Activated naive CD8-positive, alpha-beta T cell treated with anti-CD3 and anti-CD28 coated beads, Interleukin-2, amount 10 ng/mL, durations not matched to agents 7 days and 5 days (primary cell): ENCODE measurements at regions of chr22 and their contacts with region 1.

Region 1: GRCh38 chr22:41448189-41448808 is 1.7 kb upstream of the TOB2 start:
- DNase-seq: peak; percentile 81
- ATAC-seq: peak; percentile 65
- H3K4me3 Mint-ChIP-seq: peak overlapping the region; percentile 84
- H3K27ac Mint-ChIP-seq: peak overlapping the region; percentile 91
- H3K4me1 Mint-ChIP-seq: peaks cover 13% of the 10 kb centered on the region
- H3K27me3 Mint-ChIP-seq: no peaks in the 10 kb centered on the region

Region 2: DNA sequence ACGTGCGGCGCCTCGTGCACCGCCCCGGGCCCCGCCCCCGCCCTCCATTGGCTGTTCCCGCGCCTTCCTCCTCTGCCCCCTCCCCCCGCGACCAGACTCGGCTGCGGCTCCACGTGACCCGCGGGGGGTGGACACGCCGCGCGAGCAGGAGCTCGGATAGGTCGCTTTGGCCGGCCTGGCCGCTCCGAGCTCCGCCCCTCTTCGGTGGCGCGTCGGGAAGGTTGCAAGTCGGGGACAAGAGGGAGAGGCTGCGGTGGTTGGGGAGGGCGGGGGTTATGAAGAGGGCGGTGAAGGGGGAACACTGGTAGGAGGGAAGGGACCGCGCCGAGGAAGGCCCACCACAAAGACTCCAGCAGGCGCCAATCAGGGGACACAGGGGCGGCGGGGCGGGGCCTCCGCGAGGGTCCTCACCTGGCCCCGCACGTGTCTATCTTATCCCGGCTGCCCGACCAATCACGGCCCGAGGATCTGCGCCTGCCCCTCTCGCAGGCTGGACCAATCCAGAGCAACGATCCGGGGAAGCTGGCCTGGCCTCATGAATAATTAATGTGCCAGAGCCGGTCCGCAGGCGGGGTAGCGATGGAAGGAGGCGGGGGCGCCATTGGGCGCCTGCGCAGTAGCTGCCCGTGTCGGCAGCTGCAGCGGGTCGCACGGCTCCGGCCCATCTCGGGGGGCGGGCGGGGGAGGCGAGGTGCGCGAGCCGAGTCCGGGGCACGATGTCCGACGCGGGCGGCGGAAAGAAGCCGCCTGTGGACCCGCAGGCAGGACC is 66.8 kb before region 1 on chr22 and contains the start of gene TEF:
- POLR2A ChIA-PET with region 1: interaction called, 11 read pairs
- DNase-seq: peak; percentile 98
- ATAC-seq: peak; percentile 94
- H3K4me3 Mint-ChIP-seq: peak within 1 kb of the TSS; percentile 89
- H3K27ac Mint-ChIP-seq: peak within 1 kb of the TSS; percentile 96
- H3K4me1 Mint-ChIP-seq: peaks cover 5% of the 10 kb centered on the region
- H3K27me3 Mint-ChIP-seq: peaks cover 4% of the 10 kb centered on the region
- total RNA-seq, gene TEF: 3.6 to 4.0 TPM

Region 3: DNA sequence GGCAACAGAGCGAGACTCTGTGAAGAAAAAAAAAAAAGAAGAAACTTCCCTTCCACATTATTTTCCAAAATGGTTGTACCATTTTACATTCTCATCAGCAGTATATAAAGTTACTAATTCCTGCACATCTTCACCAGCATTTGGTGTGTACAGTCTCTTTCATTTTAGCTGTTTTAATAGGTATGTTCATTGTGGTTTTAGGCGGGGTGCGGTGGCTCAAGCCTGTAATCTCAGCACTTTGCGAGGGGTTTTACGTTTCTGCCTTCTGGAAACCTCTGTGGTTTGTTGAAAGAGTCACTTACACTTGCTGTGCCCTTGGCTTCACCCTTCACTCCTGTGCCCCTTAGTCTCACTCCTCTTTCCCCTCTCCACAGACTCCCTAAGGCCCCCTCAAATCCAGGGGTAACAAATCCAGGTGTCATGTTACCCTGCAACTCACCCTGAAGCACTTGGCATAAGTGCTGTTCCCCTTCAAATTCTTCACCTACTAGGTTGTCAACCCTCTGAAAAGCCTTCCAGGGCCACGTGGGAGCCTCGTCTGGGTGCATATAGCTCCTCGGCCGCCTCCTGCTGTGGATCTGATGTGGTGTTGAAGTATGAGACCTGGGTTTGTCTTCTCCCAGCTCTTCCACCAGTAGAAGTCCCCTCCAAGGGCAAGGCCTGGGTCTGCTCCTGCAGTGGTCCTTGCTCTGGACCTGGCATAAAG is 22.5 kb before region 1 on chr22:
- POLR2A ChIA-PET with region 1: interaction called, 14 read pairs
- DNase-seq: no peak
- ATAC-seq: peak; percentile 77
- H3K4me3 Mint-ChIP-seq: peak overlapping the region; percentile 45
- H3K27ac Mint-ChIP-seq: peak overlapping the region; percentile 70
- H3K4me1 Mint-ChIP-seq: peaks cover 12% of the 10 kb centered on the region
- H3K27me3 Mint-ChIP-seq: no peaks in the 10 kb centered on the region

Region 4: DNA sequence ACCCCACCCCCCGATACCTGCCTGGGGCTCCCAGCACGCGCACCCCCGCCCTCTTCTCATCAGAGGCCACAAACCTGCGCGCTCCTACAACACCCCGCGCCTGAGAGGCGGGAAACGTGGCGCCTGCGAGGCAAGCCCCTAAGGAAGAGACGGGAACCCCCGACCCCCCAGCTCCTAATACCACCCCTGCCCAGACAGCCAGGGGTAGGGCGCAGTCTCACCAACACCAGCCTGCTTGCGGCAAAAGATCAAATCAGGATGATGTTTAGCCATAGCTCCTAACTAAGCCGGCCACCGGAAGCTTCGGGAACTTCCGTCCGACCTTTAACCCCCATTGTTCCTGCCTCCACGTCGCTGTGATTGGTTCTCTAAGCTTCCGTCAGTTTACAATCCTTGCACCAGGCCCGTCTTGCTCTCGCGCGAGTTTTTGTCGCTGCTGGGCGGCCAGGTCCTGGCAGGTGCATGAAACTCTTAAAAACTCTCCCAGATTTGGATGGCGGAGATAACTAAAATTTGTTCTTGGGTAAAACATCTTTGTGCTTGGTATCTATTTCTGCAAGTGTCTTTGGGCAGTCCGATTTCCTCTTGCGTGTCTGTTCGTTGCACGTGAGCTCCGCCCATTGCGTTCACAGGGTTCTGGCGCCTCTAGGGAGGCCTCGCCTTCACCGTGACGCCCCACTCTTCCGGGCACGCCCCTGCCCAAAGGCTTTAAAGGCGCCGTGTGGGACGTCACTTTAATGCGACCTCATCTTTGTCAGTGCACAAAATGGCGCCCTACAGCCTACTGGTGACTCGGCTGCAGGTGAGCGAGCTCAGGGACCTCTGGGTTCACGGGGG is 20.3 kb after region 1 on chr22 and contains the starts of genes ACO2 and PHF5A:
- POLR2A ChIA-PET with region 1: interaction called, 142 read pairs
- DNase-seq: peak; percentile 97
- ATAC-seq: peak; percentile 91
- H3K4me3 Mint-ChIP-seq: peak within 1 kb of the TSS; percentile 94
- H3K27ac Mint-ChIP-seq: peak within 1 kb of the TSS; percentile 100
- H3K4me1 Mint-ChIP-seq: peaks cover 39% of the 10 kb centered on the region
- H3K27me3 Mint-ChIP-seq: no peaks in the 10 kb centered on the region
- total RNA-seq, gene ACO2: 73.7 to 76.2 TPM
- total RNA-seq, gene PHF5A: 47.0 to 51.0 TPM